HAP-1 (cell line): ENCODE measurements at regions of chr11 and their contacts with region 1.

Region 1: GRCh38 chr11:101444164-101444563 is 139.6 kb downstream of the TRPC6 start:
- DNase-seq: no peak
- H3K4me3 ChIP-seq: no peak overlapping the region
- H3K4me1 ChIP-seq: no peaks in the 10 kb centered on the region
- H3K27me3 ChIP-seq: no peaks in the 10 kb centered on the region

Region 2: DNA sequence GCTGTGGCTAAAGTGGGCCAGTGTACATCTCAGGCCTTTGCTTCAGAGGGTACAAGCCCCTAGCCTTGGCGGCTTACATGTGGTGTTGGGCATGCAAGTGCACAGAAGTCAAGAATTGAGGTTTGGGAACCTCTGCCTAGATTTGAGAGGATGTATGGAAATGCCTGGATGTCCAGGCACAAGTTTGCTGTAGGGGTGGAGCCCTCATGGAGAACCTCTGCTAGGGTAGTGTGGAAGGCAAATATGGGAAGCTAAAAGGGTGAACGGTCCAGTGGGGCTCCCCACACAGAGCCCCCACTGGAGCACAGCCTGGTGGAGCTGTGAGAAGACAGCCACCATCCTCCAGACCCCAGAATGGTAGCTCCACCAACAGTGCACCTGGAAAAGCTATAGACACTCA is 286.0 kb before region 1 on chr11:
- in situ Hi-C with region 1: no loop called
- DNase-seq: no peak
- H3K4me3 ChIP-seq: no peak overlapping the region
- H3K4me1 ChIP-seq: no peaks in the 10 kb centered on the region
- H3K27me3 ChIP-seq: no peaks in the 10 kb centered on the region

Region 3: DNA sequence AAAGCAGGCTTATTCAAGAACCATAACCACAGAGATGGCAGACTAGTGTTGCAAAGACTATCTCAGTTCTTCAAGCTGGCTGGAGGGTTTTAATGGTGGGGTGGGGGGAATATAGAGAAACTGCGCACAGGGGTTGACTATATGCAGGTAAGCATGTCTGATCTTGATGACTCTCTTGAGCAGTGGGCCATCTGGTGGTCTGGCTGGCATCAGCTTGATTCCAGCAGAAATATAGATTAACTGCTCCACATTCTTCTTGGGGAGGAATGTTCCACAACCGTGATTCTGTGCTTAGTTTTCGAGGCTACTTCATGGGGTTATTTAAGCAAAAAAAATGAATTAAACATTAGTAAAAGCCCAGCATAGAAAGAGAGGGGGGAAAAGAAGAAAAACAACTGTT is 155.8 kb before region 1 on chr11:
- in situ Hi-C with region 1: no loop called
- DNase-seq: no peak
- H3K4me3 ChIP-seq: no peak overlapping the region
- H3K4me1 ChIP-seq: no peaks in the 10 kb centered on the region
- H3K27me3 ChIP-seq: no peaks in the 10 kb centered on the region

Region 4: GRCh38 chr11:101666916-101667315 is 222.8 kb after region 1 on chr11:
- in situ Hi-C with region 1: no loop called
- DNase-seq: no peak
- H3K4me3 ChIP-seq: no peak overlapping the region
- H3K4me1 ChIP-seq: no peaks in the 10 kb centered on the region
- H3K27me3 ChIP-seq: no peaks in the 10 kb centered on the region

Region 5: GRCh38 chr11:101848262-101848661 is 404.1 kb after region 1 on chr11:
- in situ Hi-C with region 1: loop called (anchors 10 kb)
- DNase-seq: peak; percentile 19 to 31
- H3K4me3 ChIP-seq: no peak overlapping the region
- H3K4me1 ChIP-seq: no peaks in the 10 kb centered on the region; the same call in 1 of the 2 replicates
- H3K27me3 ChIP-seq: no peaks in the 10 kb centered on the region